CD4-positive, alpha-beta memory T cell (primary cell): ENCODE measurements at regions of chr1 and their contacts with region 1.

Region 1: DNA sequence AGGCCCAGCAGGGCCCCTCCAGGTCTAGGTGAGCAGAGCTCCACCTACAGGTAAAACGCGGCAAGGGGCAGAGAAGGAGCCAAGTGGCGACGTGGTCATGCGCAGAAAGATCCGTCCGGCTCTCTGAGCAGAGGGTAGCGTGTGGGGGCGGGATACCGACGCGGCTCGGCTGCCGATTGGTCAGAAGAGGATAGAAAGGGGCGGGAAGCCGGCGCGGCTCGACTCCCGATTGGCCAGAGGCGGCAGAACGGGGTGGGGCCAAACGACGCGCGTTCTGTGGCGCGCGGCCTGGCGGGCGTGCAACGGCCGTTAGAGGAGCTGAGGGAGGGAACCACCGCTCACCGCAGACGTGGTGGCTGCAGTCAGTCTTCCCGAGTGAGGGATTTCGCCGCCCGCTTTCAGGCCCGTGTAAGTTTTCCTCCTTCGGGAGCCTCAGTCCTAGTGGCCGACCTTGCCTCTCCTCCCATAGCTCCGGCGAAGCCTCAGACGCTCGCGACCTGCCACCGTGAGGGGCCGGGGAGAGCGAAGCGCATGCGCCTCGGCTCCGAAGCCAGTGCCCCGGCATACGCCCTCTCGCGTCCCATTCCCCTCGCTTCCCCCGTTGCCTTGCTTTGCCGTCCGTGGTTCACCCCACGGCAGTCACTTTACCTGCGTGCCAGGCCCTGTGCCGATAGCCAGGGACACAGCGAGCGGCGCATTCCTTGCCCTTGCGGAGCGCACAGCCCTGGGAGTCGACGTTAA is at the start of gene CEP85:
- DNase-seq: peak; percentile 98 to 99 (median 98)
- H3K4me3 ChIP-seq: peak within 1 kb of the TSS; percentile 90 to 97
- H3K4me3 Mint-ChIP-seq: peak within 1 kb of the TSS; percentile 92 to 100 (median 98)
- H3K27ac ChIP-seq: peak within 1 kb of the TSS; percentile 77
- H3K27ac Mint-ChIP-seq: peak within 1 kb of the TSS; percentile 84 to 100 (median 97)
- H3K4me1 ChIP-seq: peaks cover 26% of the 10 kb centered on the region
- H3K4me1 Mint-ChIP-seq: peaks cover 18 to 43% (median 33%) of the 10 kb centered on the region in 4 donors
- H3K27me3 ChIP-seq: no peaks in the 10 kb centered on the region
- H3K27me3 Mint-ChIP-seq: peaks cover 0 to 1% of the 10 kb centered on the region in 2 donors
- total RNA-seq, gene CEP85: 20.4 to 21.9 TPM

Region 2: DNA sequence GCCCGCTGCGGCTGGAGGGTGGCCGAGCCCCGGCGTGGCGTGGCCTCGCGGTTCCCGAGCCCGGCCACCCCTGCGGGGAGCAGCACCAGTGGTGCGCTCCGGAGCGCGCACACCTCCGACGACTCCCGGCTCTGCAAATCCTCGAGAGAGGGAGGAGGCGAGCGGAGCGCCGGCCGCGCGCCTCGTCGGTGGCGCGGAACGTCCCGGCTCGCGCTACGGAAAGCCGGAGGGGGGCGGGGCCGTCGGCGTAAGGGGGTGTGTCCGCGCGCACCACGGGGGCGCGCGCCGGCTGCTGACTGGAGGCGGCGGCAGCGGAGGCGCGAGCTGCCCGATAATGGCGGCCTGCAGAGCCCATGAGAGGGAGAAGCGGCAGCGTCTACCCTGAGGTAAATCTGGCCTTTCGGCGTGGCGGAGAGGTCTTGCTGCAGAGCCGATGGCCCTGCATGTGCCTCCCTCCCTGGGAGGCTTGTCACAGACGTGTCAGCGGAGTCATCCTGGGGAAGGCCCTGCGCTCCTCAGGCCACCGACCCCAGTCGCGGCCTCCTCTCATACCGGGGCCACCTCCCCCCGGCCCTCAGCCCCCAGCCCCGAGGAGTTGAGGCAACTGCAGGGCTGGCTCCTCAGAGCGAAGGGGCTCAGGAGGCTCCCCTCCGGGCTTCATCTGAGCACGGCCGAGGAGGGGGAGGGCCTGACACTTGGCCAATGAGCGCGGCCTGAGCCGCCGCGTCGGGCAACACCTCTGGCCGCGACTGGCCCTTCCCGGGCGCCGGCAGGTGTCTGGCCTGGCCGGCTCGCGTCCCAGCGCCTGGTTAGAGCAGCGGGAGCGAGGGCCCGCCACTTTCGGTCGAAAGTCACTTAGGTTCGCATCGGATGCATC is 122.3 kb before region 1 on chr1 and contains the start of gene PDIK1L:
- CTCF ChIA-PET with region 1: interaction called, 3 read pairs
- POLR2A ChIA-PET with region 1: interaction called, 9 read pairs
- intact Hi-C with region 1: loop called (anchors 1 kb)
- DNase-seq: peak; percentile 93 to 94 (median 94)
- H3K4me3 ChIP-seq: peak within 1 kb of the TSS; percentile 49 to 91
- H3K4me3 Mint-ChIP-seq: peak within 1 kb of the TSS; percentile 92 to 96 (median 95)
- H3K27ac ChIP-seq: peak within 1 kb of the TSS; percentile 77
- H3K27ac Mint-ChIP-seq: peak within 1 kb of the TSS; percentile 88 to 98 (median 94)
- H3K4me1 ChIP-seq: peaks cover 34% of the 10 kb centered on the region
- H3K4me1 Mint-ChIP-seq: peaks cover 15 to 41% (median 32%) of the 10 kb centered on the region in 4 donors
- H3K27me3 ChIP-seq: no peaks in the 10 kb centered on the region
- H3K27me3 Mint-ChIP-seq: no peaks in the 10 kb centered on the region
- total RNA-seq, gene PDIK1L: 20.1 to 25.0 TPM

Region 3: DNA sequence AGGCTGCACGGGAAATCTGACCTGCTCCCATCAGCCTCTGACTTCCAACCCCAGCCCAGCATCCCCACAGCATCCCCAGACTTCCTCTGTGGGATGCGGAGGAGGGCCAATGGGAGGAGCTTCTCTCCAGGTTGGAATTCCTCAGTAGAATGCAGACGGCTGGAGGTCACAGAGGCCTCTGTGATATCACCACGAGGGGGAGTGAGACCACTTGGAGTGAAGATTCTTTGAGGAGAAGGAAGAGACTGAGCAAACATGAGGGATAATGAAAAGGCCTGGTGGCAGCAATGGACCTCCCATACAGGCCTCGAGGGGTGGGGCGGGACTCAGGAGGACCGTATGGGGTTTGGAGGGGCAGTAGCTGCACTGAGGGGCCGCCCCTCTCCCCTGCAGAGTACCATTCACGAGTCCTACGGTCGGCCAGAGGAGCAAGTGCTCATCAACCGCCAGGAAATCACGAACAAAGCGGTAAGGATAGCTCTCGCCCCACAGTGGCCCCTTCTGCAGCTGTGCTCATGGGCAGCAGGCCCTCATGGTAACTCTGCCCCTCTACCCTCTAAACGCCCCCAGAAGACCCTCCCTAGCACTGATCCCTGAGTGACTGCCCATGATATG is 43.6 kb before region 1 on chr1 and contains the start of gene CATSPER4:
- CTCF ChIA-PET with region 1: interaction called, 37 read pairs
- POLR2A ChIA-PET with region 1: interaction called, 3 read pairs
- intact Hi-C with region 1: loop called (anchors 1 kb)
- DNase-seq: peak in 4 of 5 donors; percentile 13 to 33 (median 18)
- H3K4me3 ChIP-seq: no peak within 1 kb of the TSS
- H3K4me3 Mint-ChIP-seq: no peak within 1 kb of the TSS
- H3K27ac ChIP-seq: no peak within 1 kb of the TSS
- H3K27ac Mint-ChIP-seq: peak within 1 kb of the TSS in 4 of 7 donors; percentile 36 to 88 (median 66)
- H3K4me1 ChIP-seq: peaks cover 7% of the 10 kb centered on the region
- H3K4me1 Mint-ChIP-seq: peaks cover 6 to 30% (median 14%) of the 10 kb centered on the region in 4 donors
- H3K27me3 ChIP-seq: no peaks in the 10 kb centered on the region
- H3K27me3 Mint-ChIP-seq: no peaks in the 10 kb centered on the region
- total RNA-seq, gene CATSPER4: not detected

Region 4: GRCh38 chr1:26254404-26254803 is 20.3 kb after region 1 on chr1:
- CTCF ChIA-PET with region 1: interaction called, 23 read pairs
- POLR2A ChIA-PET with region 1: no interaction called
- intact Hi-C with region 1: no loop called
- DNase-seq: no peak
- H3K4me3 ChIP-seq: no peak overlapping the region
- H3K4me3 Mint-ChIP-seq: no peak overlapping the region
- H3K27ac ChIP-seq: no peak overlapping the region
- H3K27ac Mint-ChIP-seq: peak overlapping the region in 2 of 7 donors; percentile 14 to 55
- H3K4me1 ChIP-seq: no peaks in the 10 kb centered on the region
- H3K4me1 Mint-ChIP-seq: peaks cover 0 to 9% (median 2%) of the 10 kb centered on the region in 4 donors
- H3K27me3 ChIP-seq: no peaks in the 10 kb centered on the region
- H3K27me3 Mint-ChIP-seq: no peaks in the 10 kb centered on the region

Region 5: DNA sequence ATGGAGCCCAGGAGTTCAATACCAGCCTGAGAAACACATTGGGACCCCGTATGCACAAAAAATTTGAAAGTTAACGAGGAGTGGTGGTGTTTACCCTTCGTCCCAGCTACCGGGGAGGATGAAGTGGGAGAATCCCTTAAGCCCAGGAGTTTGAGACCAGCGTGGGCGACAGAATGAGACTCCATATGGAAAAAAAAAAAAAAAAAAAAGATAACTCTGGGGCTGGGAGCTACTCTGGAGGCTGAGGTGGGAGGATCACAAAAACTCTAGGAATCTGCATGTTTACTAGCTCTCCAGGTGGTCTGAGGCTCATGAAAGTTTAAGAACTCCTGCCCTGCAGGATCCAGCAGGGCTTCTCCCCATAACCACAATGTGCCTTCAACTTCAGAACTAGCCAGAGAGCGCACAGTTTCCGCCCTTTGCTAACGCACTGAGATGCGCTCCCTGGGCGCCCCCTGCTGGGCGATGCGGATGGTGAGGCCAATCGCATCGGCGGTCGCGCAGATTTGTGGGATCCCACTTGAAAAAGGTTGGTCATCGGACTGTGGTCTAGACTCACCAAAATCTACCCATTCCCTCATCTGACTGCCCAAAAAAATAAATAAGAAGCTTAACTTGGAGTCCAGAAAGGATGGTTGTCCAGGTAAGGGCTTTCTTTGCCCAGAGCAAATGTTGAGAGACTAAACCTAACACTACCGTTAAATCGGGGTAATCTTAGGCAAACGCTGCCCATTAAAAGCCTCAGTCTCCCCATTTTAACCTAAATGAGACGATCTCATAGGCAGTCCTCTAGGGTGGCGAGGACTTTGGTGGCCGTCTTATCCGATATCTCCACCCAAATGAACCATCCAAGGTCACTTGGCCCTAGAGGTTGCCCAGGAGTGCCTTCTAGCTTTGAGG is 129.7 kb after region 1 on chr1:
- CTCF ChIA-PET with region 1: interaction called, 13 read pairs
- POLR2A ChIA-PET with region 1: interaction called, 8 read pairs
- intact Hi-C with region 1: loop called (anchors 1 kb)
- DNase-seq: peak; percentile 78 to 84 (median 79)
- H3K4me3 ChIP-seq: no peak overlapping the region
- H3K4me3 Mint-ChIP-seq: peak overlapping the region in 6 of 8 donors; percentile 54 to 82 (median 64)
- H3K27ac ChIP-seq: no peak overlapping the region
- H3K27ac Mint-ChIP-seq: peak overlapping the region in 6 of 7 donors; percentile 27 to 88 (median 70)
- H3K4me1 ChIP-seq: peaks cover 70% of the 10 kb centered on the region
- H3K4me1 Mint-ChIP-seq: peaks cover 31 to 81% (median 52%) of the 10 kb centered on the region in 4 donors
- H3K27me3 ChIP-seq: no peaks in the 10 kb centered on the region
- H3K27me3 Mint-ChIP-seq: no peaks in the 10 kb centered on the region

Region 6: GRCh38 chr1:26417111-26417759 is 183.2 kb after region 1 on chr1:
- CTCF ChIA-PET with region 1: interaction called, 30 read pairs
- POLR2A ChIA-PET with region 1: interaction called, 6 read pairs
- intact Hi-C with region 1: no loop called
- DNase-seq: peak; percentile 76 to 81 (median 78)
- H3K4me3 ChIP-seq: no peak overlapping the region
- H3K4me3 Mint-ChIP-seq: no peak overlapping the region
- H3K27ac ChIP-seq: no peak overlapping the region
- H3K27ac Mint-ChIP-seq: no peak overlapping the region
- H3K4me1 ChIP-seq: no peaks in the 10 kb centered on the region
- H3K4me1 Mint-ChIP-seq: peaks cover 0 to 3% (median 0%) of the 10 kb centered on the region in 4 donors
- H3K27me3 ChIP-seq: peaks cover 19% of the 10 kb centered on the region
- H3K27me3 Mint-ChIP-seq: peaks cover 12 to 23% of the 10 kb centered on the region in 2 donors